ENCODE measurements at regions of chr17 and their contacts with region 1.

Region 1: GRCh38 chr17:10875979-10876555 is 38.2 kb upstream of the PIRT start:
- DNase-seq: peak; percentile 56
- H3K4me3 ChIP-seq: no peak overlapping the region
- H3K27ac ChIP-seq: no peak overlapping the region
- H3K4me1 ChIP-seq: peaks cover 0 to 3% (median 0%) of the 10 kb centered on the region in 4 donors
- H3K27me3 ChIP-seq: peaks cover 2% of the 10 kb centered on the region
- CTCF ChIP-seq: peak; percentile 63 to 77 (median 74)
- EP300 ChIP-seq: no peak
- POLR2A ChIP-seq: no peak

Region 2: GRCh38 chr17:11144358-11145233 is 268.5 kb after region 1 on chr17:
- in situ Hi-C with region 1: loop called (anchors 5 to 10 kb)
- intact Hi-C with region 1: loop called (anchors 10 kb)
- DNase-seq: peak; percentile 67
- H3K4me3 ChIP-seq: no peak overlapping the region
- H3K27ac ChIP-seq: no peak overlapping the region
- H3K4me1 ChIP-seq: no peaks in the 10 kb centered on the region
- H3K27me3 ChIP-seq: no peaks in the 10 kb centered on the region
- CTCF ChIP-seq: peak; percentile 66 to 75 (median 68)
- EP300 ChIP-seq: no peak
- POLR2A ChIP-seq: no peak

Region 3: DNA sequence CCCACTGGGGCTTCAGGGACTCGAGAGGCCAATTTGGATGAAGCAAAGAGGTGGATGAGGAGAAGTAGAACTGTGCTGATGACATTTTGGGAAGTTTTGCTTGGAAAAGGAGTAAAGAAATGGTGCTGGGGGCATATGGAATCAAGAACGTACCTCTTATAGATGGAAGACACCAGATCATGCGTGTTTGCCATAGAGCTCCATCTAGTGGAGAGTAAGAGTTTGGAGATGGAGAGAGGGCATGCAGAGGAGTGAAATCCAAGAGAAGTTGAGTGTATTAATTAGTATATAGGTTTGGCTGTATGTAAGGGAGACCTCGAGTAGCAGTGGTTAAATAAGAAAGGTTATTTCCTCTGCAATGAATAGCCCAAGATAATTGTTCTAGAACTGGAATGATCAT is 420.9 kb after region 1 on chr17:
- in situ Hi-C with region 1: loop called in 1 of 4 experiments (anchors 10 kb)
- intact Hi-C with region 1: no loop called
- DNase-seq: no peak
- H3K4me3 ChIP-seq: no peak overlapping the region
- H3K27ac ChIP-seq: no peak overlapping the region
- H3K4me1 ChIP-seq: no peaks in the 10 kb centered on the region
- H3K27me3 ChIP-seq: no peaks in the 10 kb centered on the region
- CTCF ChIP-seq: peak in 2 of 5 experiments; percentile 26 to 42
- EP300 ChIP-seq: no peak
- POLR2A ChIP-seq: no peak

Region 4: DNA sequence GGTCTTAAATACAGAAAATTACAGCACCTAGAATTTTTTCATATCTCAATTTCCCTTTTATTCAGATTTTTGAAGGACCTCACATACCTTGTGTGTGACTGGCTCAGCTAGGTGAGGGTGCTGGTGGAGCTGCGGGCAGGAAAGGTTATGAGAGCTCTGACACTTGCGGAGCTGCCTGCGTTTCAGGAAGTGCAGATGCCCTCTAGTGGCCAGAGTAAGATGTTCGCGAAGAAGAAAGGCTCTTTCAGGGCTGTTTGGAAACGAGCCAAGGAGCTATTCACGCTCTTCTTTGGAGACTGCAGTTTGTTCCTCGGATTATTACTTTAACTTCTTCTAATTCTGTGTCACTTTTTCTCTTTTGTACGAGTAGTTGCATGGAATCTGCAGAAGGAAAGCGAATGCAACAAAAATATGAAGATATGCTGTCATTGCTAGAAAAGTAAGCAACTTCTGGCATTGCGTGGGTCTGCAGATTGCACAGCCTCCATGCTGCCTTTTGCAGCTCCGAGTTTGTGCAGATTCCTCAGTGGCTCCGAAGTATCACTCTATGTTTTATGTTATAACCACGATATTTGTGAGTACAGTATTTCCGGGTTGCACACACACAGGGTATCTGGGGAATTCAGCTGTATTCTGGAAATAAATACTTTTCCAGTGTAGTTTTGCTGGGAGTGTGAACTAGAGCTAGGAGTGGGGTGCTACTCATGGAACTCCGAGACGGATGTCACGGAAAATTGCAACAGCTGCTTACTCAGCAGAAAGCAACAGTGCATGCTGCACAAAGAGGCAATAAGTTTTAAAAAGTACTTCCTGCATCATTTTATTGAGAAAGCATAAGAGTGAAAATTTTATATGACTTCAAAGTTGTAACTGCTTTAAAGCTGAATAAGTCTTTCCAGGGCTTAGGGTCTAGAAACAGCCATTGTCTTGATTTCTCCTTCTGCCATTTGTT is 768.5 kb after region 1 on chr17:
- in situ Hi-C with region 1: no loop called
- intact Hi-C with region 1: loop called (anchors 10 kb)
- DNase-seq: peak; percentile 71
- H3K4me3 ChIP-seq: no peak overlapping the region
- H3K27ac ChIP-seq: no peak overlapping the region
- H3K4me1 ChIP-seq: peaks cover 0 to 8% (median 3%) of the 10 kb centered on the region in 4 donors
- H3K27me3 ChIP-seq: no peaks in the 10 kb centered on the region
- CTCF ChIP-seq: peak; percentile 69 to 82 (median 80)
- EP300 ChIP-seq: no peak
- POLR2A ChIP-seq: no peak

Region 5: DNA sequence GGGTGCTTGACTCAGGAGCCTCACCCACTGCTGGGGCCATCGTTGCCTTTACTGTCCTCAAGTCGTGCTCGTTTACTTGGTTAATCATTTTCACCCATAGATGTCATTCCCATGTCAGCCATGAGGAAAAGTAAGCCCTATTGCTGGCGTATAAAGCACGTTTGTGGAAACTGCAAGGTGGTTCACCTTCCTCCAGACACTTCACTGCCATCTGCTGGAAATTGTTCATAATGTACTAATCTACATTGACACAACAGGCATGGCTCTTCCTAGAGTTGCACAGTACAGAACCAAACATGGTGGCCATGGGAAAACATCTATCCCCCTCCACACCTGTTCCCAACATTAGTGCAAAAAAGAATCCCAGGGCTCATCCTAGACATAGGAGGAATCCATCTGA is 1004.6 kb after region 1 on chr17:
- in situ Hi-C with region 1: loop called in 1 of 4 experiments (anchors 25 kb)
- intact Hi-C with region 1: no loop called
- DNase-seq: peak; percentile 14
- H3K4me3 ChIP-seq: no peak overlapping the region
- H3K27ac ChIP-seq: no peak overlapping the region
- H3K4me1 ChIP-seq: peaks cover 0 to 4% (median 0%) of the 10 kb centered on the region in 4 donors
- H3K27me3 ChIP-seq: no peaks in the 10 kb centered on the region
- CTCF ChIP-seq: peak; percentile 28 to 82 (median 45)
- EP300 ChIP-seq: no peak
- POLR2A ChIP-seq: no peak

Region 6: GRCh38 chr17:11900041-11900476 is 1024.0 kb after region 1 on chr17:
- in situ Hi-C with region 1: loop called in 2 of 4 experiments (anchors 25 kb)
- intact Hi-C with region 1: no loop called
- DNase-seq: no peak
- H3K4me3 ChIP-seq: no peak overlapping the region
- H3K27ac ChIP-seq: no peak overlapping the region
- H3K4me1 ChIP-seq: no peaks in the 10 kb centered on the region
- H3K27me3 ChIP-seq: no peaks in the 10 kb centered on the region
- CTCF ChIP-seq: no peak
- EP300 ChIP-seq: no peak
- POLR2A ChIP-seq: no peak

Region 7: DNA sequence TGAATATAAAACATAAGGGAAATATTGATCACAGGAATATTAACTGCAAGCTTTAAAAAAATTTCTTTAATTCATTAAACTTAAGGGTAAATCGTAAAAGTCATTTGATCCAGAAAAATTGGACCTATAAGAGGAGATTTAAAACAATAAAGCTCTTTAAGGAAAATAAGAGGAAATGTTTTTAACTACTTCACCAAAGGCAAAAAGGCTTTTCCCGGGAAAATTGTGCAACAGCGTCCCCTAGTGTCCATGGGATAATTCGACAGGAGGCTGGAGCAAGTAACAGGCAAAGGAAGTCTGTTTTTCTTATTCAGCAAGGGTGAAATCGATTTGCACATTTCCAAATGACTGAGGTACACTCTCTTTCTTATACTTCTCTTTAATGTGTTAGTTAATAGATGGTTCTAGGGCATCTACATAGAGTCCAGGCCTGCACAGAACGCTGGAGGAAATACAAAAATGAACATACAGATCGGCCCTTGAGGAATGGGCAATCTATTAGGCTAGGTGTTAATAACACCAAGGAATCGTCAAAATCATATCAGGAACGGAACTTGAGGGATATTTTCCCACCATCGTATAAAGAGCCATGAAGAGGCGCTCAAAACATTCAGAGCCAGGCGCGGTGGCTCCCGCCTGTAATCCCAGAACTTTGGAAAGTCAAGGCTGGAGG is 1059.8 kb after region 1 on chr17:
- in situ Hi-C with region 1: loop called in 1 of 4 experiments (anchors 10 kb)
- intact Hi-C with region 1: no loop called
- DNase-seq: peak; percentile 67
- H3K4me3 ChIP-seq: no peak overlapping the region
- H3K27ac ChIP-seq: no peak overlapping the region
- H3K4me1 ChIP-seq: no peaks in the 10 kb centered on the region
- H3K27me3 ChIP-seq: no peaks in the 10 kb centered on the region
- CTCF ChIP-seq: peak; percentile 74 to 85 (median 84)
- EP300 ChIP-seq: no peak
- POLR2A ChIP-seq: no peak